Activated B cell treated with CpG ODN at 0.5 μM for 24 hours (primary cell): ENCODE measurements at regions of chr19 and their contacts with region 1.

Region 1: DNA sequence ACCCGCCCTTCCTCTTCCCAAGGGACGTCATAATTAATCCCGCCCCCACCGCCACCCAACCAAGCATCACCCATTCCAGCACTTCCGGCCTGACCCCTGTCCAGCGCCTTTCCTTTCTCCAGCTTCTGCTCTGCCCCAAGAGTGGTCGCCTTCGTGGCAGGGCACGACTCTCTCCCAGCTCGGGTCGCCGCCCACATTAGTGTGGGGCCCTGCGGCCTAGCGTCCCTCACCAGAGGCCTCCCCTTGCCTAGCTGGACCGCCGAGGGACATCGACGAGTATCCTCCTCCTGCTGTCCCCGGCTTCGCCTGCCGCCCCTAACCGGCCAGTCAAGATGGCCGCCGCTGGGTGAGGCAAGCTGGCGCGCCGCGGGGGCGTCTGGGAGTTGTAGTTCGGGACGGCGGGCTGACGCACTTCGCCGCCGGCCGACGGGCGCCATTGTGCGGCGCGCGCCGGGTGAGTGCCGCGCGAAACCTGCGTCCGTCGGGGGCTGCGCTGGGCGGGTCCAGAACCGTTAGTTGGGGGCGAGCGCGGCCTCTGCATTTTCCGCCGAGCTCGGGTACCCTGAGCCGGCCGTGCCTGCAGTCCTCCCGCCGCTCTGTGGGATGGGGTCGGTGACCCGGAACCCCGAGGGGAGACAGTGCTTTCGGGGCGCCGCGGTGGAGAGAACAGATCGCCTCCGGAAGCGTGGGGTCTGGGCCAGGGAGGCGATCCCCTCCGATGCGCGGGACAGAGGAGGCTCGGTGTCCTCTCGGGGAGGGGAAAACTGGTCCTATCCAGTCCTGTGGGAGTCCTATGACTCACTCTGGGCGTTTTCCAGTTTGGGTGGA is at the start of gene ZNF274:
- DNase-seq: peak; percentile 93
- ATAC-seq: peak; percentile 84
- H3K4me3 Mint-ChIP-seq: peak within 1 kb of the TSS; percentile 92
- H3K27ac Mint-ChIP-seq: peak within 1 kb of the TSS; percentile 98
- H3K4me1 Mint-ChIP-seq: peaks cover 24% of the 10 kb centered on the region
- H3K27me3 Mint-ChIP-seq: no peaks in the 10 kb centered on the region
- CTCF ChIP-seq: no peak
- total RNA-seq, gene ZNF274: 47.2 and 50.3 TPM in 2 replicates

Region 2: DNA sequence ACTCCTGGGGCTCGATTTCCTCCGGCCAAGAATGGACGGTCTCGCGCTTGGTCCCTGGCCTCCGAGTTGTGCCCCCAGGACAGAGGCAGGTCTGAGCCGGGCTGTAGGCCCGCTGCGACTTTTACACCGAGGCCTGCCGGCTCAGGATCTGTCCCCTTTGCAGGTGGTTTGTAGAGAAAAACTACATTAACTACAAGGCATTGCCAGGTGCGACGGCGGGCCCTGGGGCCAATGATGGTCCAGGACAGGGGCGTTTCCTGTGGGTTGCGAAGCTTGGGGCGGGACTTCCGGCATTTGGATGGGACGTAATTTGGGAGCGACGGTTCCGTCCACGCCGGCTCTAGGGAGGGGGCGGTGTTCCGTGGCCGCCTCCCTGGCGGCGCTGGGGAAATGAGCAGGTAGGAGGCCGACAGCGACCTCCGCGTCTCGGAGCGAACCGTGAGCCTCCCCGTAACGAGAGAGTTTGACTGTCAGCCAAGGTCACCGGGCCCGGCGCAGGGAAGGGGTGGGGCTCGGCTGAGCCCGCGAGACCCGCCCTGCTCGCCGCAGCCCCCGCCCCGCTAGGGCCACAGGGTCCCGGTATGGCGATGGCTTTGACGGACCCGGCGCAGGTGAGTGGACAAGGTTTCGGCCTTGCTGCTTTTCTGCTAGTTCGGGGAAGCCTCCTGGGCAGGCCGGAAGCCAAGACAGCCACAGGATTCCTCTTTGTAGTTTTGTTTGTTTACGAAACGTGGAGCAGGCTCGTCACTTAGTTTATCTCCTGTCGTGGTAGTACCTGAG is 942.7 kb before region 1 on chr19 and contains the start of gene ZNF805:
- CTCF ChIA-PET with region 1: no interaction called
- POLR2A ChIA-PET with region 1: no interaction called
- intact Hi-C with region 1: loop called (anchors 2 kb)
- DNase-seq: peak; percentile 90
- ATAC-seq: peak; percentile 93
- H3K4me3 Mint-ChIP-seq: peak within 1 kb of the TSS; percentile 95
- H3K27ac Mint-ChIP-seq: peak within 1 kb of the TSS; percentile 93
- H3K4me1 Mint-ChIP-seq: peaks cover 39% of the 10 kb centered on the region
- H3K27me3 Mint-ChIP-seq: no peaks in the 10 kb centered on the region
- CTCF ChIP-seq: no peak
- total RNA-seq, gene ZNF805: 20.3 and 25.9 TPM in 2 replicates

Region 3: DNA sequence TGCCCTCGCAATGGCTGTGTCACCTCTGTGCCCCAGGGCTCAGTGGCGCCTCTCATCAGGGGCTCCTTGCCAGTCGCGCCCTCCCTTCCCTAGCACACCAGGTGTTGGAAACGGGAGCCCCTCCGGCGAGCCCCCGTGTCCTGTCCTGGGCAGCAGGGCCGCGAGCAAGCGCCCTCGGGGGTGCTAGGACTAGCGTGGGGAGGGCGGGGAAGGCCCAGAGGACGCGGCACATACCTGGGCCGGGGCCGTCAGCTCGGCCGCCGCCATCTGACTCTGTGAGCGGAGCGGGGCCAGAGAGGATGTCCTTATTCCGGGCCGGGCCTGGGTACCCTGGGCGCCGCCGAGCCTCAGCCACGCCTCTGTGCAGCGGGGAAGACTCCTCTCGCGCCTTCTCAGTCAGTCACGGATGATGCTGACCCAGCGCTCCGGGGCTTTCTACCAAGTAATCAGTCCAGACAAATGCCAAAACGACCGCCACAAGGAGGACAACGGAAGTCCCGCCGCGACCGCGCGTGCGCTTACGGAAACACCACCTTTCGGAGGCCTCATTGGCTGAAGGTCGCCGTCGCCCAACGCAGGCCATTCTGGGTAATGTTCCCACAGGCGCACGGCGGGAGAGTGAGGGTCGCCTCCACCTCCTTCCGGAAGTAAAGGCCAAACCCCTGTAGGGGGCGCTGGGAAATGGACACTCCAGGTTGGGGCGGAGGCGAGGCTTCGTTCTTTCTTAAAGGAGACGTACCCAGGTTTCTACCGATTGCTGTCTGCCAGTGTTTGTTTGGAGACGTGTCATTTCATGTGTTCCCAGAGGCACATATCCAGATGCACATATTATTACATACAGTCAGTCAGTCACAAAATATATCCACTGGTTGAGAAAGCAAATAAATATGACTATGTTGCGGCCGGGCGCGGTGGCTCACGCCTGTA is 235.7 kb before region 1 on chr19 and contains the start of gene ZNF256:
- CTCF ChIA-PET with region 1: no interaction called
- POLR2A ChIA-PET with region 1: no interaction called
- intact Hi-C with region 1: loop called (anchors 1 kb)
- DNase-seq: peak; percentile 83
- ATAC-seq: peak; percentile 99
- H3K4me3 Mint-ChIP-seq: peak within 1 kb of the TSS; percentile 96
- H3K27ac Mint-ChIP-seq: peak within 1 kb of the TSS; percentile 89
- H3K4me1 Mint-ChIP-seq: peaks cover 30% of the 10 kb centered on the region
- H3K27me3 Mint-ChIP-seq: no peaks in the 10 kb centered on the region
- CTCF ChIP-seq: no peak
- total RNA-seq, gene ZNF256: 16.6 and 20.2 TPM in 2 replicates

Region 4: DNA sequence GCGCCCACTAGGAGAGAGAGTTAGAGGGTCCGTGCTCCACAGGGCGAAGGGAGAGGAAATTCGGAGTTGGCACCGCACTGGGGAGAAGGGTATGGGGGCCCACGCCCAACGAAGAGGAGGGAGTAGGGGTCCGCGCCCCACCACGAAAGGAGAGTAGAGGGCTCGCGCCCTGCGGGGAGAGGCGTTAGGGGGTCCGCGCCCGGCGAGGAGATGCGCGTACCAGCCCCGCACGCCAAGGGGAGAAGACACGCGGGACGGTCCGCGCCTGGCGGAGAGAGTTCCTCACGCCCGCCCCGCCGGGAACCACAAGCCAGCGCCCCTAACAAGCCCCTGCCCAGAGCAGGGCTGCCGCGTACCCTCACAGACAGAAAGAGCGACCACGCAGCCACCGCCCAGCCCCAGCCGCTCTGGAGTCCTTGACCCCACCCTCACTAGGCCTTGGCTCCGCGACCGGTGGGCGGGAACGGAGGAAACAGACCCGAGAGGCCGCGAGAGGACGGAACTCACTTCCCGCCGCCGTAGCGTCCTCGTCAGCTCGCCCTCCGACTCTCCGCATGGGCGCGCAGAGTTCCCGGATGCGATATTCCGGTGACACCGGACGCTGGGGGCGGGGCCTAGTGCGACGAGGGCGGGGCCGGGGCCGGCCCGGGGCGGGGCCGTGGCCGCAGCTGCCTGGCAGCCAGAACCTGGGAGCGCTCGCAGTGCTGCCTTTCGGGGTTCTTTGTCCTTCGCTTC is 65.2 kb before region 1 on chr19:
- CTCF ChIA-PET with region 1: no interaction called
- POLR2A ChIA-PET with region 1: no interaction called
- intact Hi-C with region 1: no loop called
- DNase-seq: no peak
- ATAC-seq: no peak
- H3K4me3 Mint-ChIP-seq: no peak overlapping the region
- H3K27ac Mint-ChIP-seq: no peak overlapping the region
- H3K4me1 Mint-ChIP-seq: no peaks in the 10 kb centered on the region
- H3K27me3 Mint-ChIP-seq: peaks cover 9% of the 10 kb centered on the region
- CTCF ChIP-seq: no peak

Region 5: GRCh38 chr19:58154679-58155648 is 28.2 kb before region 1 on chr19:
- CTCF ChIA-PET with region 1: interaction called, 4 read pairs
- POLR2A ChIA-PET with region 1: interaction called, 11 read pairs
- intact Hi-C with region 1: no loop called
- DNase-seq: peak; percentile 99
- ATAC-seq: peak; percentile 82
- H3K4me3 Mint-ChIP-seq: peak overlapping the region; percentile 82
- H3K27ac Mint-ChIP-seq: peak overlapping the region; percentile 70
- H3K4me1 Mint-ChIP-seq: peaks cover 12% of the 10 kb centered on the region
- H3K27me3 Mint-ChIP-seq: no peaks in the 10 kb centered on the region
- CTCF ChIP-seq: peak; percentile 16

Region 6: GRCh38 chr19:58305065-58305931 is 122.1 kb after region 1 on chr19 and contains the start of gene ERVK3-1:
- CTCF ChIA-PET with region 1: no interaction called
- POLR2A ChIA-PET with region 1: interaction called, 10 read pairs
- intact Hi-C with region 1: loop called (anchors 1 kb)
- DNase-seq: peak; percentile 89
- ATAC-seq: peak; percentile 97
- H3K4me3 Mint-ChIP-seq: peak within 1 kb of the TSS; percentile 100
- H3K27ac Mint-ChIP-seq: peak within 1 kb of the TSS; percentile 98
- H3K4me1 Mint-ChIP-seq: peaks cover 38% of the 10 kb centered on the region
- H3K27me3 Mint-ChIP-seq: no peaks in the 10 kb centered on the region
- CTCF ChIP-seq: no peak
- total RNA-seq, gene ERVK3-1: 61.4 and 74.3 TPM in 2 replicates

Region 7: GRCh38 chr19:58317476-58318072 is 134.4 kb after region 1 on chr19:
- CTCF ChIA-PET with region 1: no interaction called
- POLR2A ChIA-PET with region 1: no interaction called
- intact Hi-C with region 1: no loop called
- DNase-seq: no peak
- ATAC-seq: no peak
- H3K4me3 Mint-ChIP-seq: no peak overlapping the region
- H3K27ac Mint-ChIP-seq: no peak overlapping the region
- H3K4me1 Mint-ChIP-seq: no peaks in the 10 kb centered on the region
- H3K27me3 Mint-ChIP-seq: no peaks in the 10 kb centered on the region
- CTCF ChIP-seq: no peak

Region 8: GRCh38 chr19:58380722-58381466 is 197.7 kb after region 1 on chr19 and contains the start of gene ZNF837:
- CTCF ChIA-PET with region 1: interaction called, 4 read pairs
- POLR2A ChIA-PET with region 1: interaction called, 5 read pairs
- intact Hi-C with region 1: loop called (anchors 1 kb)
- DNase-seq: peak; percentile 96
- ATAC-seq: peak; percentile 86
- H3K4me3 Mint-ChIP-seq: peak within 1 kb of the TSS; percentile 83
- H3K27ac Mint-ChIP-seq: peak within 1 kb of the TSS; percentile 87
- H3K4me1 Mint-ChIP-seq: peaks cover 37% of the 10 kb centered on the region
- H3K27me3 Mint-ChIP-seq: no peaks in the 10 kb centered on the region
- CTCF ChIP-seq: no peak
- total RNA-seq, gene ZNF837: 3.1 and 3.5 TPM in 2 replicates

Region 9: DNA sequence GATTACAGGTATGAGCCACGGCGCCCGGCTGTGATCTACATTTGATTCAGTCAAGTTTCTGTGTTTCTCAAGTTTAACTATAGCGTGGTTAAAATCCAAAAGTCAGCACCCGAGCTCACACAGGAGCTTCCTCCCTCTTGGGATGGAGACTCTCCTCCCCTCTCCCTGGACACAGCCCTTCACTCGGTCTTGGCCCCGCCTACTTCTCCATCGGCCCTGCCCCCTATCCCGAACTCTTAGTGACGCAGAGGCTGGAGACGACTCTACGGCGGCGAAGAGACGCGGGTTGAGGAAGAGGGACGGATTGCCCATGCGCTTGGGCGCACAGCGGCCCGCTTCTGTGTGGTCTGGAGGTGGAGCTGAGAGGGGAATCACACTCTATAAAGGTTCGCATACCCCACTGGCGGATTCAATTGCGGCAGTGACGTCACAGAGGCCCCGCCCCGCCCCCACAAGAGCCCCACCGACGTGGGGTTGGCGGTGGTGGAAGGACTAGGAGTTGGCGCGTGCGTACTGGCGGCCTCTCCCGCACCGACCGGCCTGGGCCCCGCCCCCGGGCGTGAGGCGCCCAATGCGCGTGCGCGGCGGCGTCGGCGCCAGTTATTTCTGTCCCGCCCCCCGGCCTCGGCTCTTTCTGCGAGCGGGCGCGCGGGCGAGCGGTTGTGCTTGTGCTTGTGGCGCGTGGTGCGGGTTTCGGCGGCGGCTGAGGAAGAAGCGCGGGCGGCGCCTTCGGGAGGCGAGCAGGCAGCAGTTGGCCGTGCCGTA is 360.8 kb after region 1 on chr19 and contains the start of gene TRIM28:
- CTCF ChIA-PET with region 1: no interaction called
- POLR2A ChIA-PET with region 1: no interaction called
- intact Hi-C with region 1: loop called (anchors 1 kb)
- DNase-seq: peak; percentile 100
- ATAC-seq: peak; percentile 87
- H3K4me3 Mint-ChIP-seq: peak within 1 kb of the TSS; percentile 94
- H3K27ac Mint-ChIP-seq: peak within 1 kb of the TSS; percentile 98
- H3K4me1 Mint-ChIP-seq: peaks cover 27% of the 10 kb centered on the region
- H3K27me3 Mint-ChIP-seq: peaks cover 16% of the 10 kb centered on the region
- CTCF ChIP-seq: no peak
- total RNA-seq, gene TRIM28: 380 and 407 TPM in 2 replicates